Left cardiac atrium (tissue), 4 donors: ENCODE measurements at regions of chr17 and their contacts with region 1.

Region 1: DNA sequence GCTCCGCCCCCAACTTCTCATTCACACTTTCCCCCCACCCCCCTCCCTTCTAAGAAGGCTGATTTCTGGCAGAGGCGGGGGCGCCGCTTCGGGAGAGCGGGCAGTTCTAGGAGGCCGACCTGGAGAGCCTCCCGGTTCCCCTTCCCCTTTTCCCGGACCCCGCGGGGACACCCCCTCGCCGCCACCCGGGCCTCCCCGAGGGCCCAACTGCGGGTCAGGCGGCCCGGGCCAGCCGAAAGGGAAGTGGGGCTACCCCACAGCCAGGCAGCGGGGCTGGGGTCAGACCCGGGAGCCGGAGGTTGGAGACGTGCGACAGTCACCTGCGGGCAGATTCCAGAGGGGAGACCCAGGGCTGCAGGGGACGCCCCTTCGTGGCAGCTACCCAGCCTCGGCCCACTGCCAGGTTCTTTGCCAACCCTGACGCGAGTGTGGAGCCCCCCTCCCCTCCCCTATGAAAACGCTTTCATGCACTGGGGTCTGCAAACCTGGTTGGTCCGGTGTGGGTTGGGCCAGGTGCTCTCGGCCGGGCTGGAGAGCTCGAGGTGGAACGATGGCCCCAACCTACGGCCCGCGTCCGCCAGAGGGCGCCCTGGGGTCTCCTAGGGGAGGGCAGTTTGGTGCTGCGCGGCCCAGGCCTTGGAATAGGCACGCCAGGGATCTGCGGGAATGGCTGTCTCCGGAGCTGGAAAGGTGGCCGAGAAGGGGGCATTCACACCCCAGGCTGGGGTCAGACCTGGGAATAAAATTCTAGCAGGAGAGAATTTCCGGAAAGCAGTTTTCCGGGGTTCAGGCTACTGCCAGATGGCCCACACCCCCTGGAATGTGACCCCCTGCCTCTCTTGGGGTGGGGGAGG is 721 bp upstream of the SOCS3 start:
- DNase-seq: peak; percentile 94
- ATAC-seq: peak; percentile 66 to 75

Region 2: DNA sequence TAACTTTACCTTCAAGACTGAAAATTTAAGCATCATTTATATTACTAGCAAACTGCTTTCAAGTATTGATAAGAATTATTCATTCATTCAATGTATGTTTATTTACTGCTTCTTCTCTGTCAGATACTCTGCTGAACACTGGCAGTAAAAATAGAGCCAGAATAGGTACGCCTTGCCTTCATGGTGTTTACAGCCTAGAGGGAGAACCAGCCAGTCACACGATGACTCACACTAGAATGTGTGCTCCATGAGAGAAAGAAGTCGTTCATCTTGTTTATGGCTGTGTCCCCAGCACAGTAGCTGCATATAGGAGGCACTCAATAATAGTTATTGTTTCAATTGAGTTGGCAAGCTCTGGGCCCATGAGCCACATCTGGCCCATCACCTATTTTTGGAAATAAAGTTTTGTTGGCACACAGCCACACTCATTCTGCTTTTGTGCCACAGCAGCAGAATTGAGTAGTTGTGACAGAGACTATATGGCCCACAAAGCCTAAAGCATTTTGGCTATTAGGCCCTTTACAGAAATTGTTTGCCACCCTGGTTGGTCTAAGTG is 316.2 kb before region 1 on chr17:
- intact Hi-C with region 1: no loop called
- DNase-seq: no peak
- ATAC-seq: no peak

Region 3: DNA sequence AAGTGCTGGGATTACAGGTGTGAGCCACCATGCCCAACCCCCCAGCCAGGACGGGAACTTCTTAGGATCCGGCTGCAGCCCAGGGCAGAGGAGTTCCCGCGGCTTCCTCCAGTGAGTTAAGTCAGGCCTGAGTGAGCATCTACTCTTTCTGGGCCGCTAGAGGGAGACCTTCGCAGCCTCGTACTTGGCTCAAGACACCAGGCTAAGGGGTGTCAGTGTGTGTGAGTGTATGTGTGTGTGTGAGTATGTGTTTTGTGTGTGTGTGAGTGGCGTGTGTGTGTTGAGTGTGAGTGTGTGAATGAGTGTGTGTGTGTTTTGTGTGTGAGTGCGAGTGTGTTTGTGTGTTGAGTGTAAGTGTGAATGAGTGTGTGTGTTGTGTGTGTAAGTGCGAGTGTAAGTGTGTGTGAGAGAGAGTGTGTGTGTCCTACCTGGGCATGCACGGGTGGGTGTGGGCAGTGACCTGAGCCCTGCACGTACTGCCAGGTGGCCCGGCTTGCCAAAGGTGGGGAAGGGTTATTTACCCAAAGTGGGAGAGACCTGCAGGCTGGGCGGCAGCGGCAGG is 70.7 kb before region 1 on chr17:
- intact Hi-C with region 1: loop called in 1 of 2 experiments (anchors 5 kb)
- DNase-seq: peak; percentile 85
- ATAC-seq: peak; percentile 94

Region 4: GRCh38 chr17:78397681-78398101 is 37.1 kb after region 1 on chr17:
- intact Hi-C with region 1: loop called in 1 of 2 experiments (anchors 5 kb)
- DNase-seq: peak; percentile 56
- ATAC-seq: peak; percentile 88 to 94